ENCODE measurements at regions of chr6 and their contacts with region 1.

Region 1: DNA sequence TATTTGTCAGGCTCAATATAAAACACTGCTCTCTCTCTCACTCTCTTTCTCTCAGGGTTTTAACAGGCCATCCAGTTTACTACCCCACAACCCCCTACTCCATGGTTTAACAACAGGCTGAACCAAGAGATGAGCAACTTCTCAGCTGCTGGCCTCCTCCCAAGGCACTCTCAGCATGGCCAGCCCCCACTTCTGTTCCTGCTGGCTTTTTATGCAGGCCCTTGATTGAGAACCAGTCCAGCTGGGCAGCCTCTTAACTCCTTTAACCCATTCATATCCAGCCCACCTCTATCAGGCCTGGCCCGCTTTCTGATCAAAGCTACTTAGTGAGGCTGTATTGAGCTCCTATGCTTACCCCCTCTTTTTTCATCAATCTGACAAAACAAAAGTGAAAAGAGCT is 346.8 kb upstream of the POU3F2 start:
- DNase-seq: no peak

Region 2: GRCh38 chr6:98433325-98434056 is 54.1 kb before region 1 on chr6:
- intact Hi-C with region 1: loop called in 1 of 2 experiments (anchors 2 kb)
- DNase-seq: no peak

Region 3: GRCh38 chr6:98566126-98566525 is 78.5 kb after region 1 on chr6:
- intact Hi-C with region 1: no loop called
- DNase-seq: no peak

Region 4: GRCh38 chr6:98627129-98627775 is 139.6 kb after region 1 on chr6:
- intact Hi-C with region 1: no loop called
- DNase-seq: no peak